ENCODE measurements at regions of chr6 and their contacts with region 1.

Region 1: DNA sequence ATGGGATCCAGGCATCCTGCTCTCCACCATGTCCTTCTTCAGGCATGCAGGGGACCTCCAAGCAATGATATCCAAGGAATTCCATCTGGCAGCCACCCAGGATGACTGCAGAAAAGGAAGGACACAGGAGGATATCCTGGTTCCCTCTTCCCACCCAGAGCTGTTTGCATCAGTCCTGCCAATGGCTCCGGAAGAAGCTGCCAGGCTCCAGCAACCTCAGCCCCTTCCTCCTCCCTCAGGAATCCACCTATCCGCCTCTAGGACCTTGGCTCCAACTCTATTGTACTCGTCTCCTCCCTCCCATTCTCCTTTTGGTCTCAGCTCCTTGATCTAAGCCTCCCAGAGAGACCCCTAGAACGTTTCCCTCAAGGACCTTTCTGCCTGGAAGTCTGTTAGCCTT is 733 bp upstream of the PSORS1C2 start:
- DNase-seq: no peak
- ATAC-seq: no peak

Region 2: GRCh38 chr6:31197559-31198305 is 58.1 kb after region 1 on chr6:
- intact Hi-C with region 1: loop called (anchors 10 kb)
- DNase-seq: peak; percentile 95
- ATAC-seq: peak; percentile 95

Region 3: DNA sequence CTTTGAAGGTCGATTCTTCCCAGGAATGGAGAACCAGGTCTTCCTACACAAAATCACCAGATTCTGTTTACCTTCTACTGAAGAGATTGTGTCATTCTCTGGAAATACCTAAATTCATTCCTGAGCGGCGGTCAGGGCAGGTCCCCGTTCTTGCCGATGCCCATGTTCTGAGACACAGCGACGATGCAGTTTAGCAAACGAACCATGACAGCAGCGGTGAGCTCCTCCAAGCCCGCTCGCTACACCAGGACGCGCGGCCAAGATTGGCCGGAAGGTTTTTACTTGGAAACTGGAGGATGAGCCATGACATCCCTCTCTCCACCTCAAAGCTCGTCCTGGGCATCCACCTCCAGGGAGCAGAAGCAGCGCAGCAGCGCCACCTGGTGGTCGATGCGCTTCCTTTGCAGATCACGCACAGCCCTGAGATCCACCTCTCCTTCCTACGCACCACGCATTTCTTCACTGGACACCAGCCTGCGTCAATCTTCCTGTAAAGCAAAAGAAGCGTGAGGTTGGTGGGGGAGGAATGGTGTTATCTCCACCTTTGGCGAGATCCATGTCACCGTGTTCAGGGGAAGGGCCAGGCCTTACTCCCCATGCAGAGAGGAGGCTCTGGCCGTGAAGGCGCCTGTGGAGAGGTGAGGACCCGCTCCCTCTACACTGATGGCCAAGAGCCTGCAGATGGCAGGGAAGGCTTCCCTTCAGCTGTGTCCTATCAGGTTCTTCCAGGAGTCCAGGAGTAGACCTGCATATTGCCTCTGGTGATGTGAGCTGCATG is 227.3 kb after region 1 on chr6:
- intact Hi-C with region 1: loop called (anchors 5 kb)
- DNase-seq: peak; percentile 92
- ATAC-seq: peak; percentile 100

Measured in sciatic nerve (tissue), 2 donors.